ENCODE measurements at regions of chr3 and their contacts with region 1.

Region 1: DNA sequence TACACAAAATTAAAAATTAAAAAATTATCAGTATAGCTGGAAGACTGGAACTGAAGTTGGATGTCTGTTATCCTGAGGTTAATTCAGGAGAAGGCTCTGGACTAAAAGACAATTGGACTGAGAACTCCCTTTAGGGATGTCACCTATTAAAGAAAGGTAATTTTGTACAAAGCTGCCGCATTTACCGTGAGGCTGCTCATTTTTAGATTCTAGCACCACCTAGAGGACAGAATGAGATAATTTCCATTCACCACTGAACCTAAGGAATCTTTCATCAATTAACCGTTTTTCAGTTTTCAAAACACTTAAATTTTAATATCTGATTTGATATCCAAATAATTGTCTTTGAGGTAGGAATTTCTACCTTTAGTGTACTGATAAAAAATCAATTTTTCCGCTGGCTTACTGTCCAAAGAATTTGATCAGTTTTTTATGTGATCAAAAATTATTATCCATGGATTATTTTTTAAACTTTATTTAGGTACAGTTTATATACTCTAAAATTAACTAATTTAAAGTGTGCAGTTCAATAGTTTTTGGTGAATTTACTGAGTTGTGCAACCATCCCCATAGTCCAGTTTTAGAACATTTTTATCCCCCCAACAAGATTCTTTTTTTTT is 106.7 kb upstream of the TNIK start:
- DNase-seq: no peak
- H3K4me3 ChIP-seq: no peak overlapping the region
- H3K27ac ChIP-seq: no peak overlapping the region
- H3K4me1 ChIP-seq: peaks cover 0 to 3% (median 0%) of the 10 kb centered on the region in 4 donors
- H3K27me3 ChIP-seq: no peaks in the 10 kb centered on the region
- CTCF ChIP-seq: peak; percentile 73 to 82

Region 2: DNA sequence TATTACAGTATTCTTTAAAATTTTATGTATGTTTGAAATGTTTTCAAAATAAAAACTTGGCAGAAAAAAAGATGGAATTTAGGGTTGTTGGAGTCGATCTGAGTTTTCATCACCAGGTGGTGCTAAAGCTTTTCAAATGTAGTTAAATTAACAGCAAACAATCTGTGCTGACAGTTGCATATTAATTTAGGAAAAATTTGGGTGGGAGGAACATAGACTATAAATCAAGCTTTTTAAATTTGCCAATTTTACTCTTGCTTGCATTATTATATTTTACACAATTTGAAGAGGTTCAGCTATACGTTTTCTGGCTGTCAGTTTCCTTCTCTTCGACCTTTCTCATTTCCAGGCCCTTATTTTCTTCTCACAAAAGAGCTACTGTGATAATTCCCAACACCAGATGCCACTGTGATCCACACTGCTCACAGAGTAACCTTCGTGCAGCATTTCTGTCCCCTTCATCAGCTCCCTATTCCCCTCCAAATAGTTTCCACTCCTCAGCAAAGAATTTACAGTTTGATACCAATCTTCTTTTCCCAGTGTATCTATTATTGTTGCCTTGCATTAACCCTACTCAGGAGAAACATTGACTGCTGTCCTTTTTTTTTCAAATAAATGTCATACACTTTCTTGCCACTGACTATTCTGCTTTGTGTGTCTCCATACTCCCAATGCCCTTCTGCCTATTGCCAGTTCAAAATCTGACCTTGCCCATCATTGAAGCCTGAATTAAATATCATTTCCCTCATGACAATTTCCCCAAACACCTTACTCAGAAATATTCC is 605.1 kb before region 1 on chr3:
- intact Hi-C with region 1: loop called (anchors 5 kb)
- DNase-seq: no peak
- H3K4me3 ChIP-seq: no peak overlapping the region
- H3K27ac ChIP-seq: no peak overlapping the region
- H3K4me1 ChIP-seq: no peaks in the 10 kb centered on the region
- H3K27me3 ChIP-seq: no peaks in the 10 kb centered on the region
- CTCF ChIP-seq: peak; percentile 63

Region 3: GRCh38 chr3:171049861-171050444 is 517.0 kb before region 1 on chr3:
- intact Hi-C with region 1: loop called (anchors 5 kb)
- DNase-seq: peak in 1 of 2 donors; percentile 41
- H3K4me3 ChIP-seq: no peak overlapping the region
- H3K27ac ChIP-seq: no peak overlapping the region
- H3K4me1 ChIP-seq: peaks cover 0 to 3% (median 0%) of the 10 kb centered on the region in 4 donors
- H3K27me3 ChIP-seq: no peaks in the 10 kb centered on the region
- CTCF ChIP-seq: peak; percentile 49 to 51

Region 4: GRCh38 chr3:171162986-171163723 is 403.8 kb before region 1 on chr3:
- intact Hi-C with region 1: loop called (anchors 5 kb)
- DNase-seq: no peak
- H3K4me3 ChIP-seq: no peak overlapping the region
- H3K27ac ChIP-seq: no peak overlapping the region
- H3K4me1 ChIP-seq: no peaks in the 10 kb centered on the region
- H3K27me3 ChIP-seq: no peaks in the 10 kb centered on the region
- CTCF ChIP-seq: peak; percentile 48 to 57

Measured in tibial artery (tissue), 4 donors.